Activated CD8-positive, alpha-beta T cell treated with anti-CD3 and anti-CD28 coated beads for 36 hours (primary cell): ENCODE measurements at regions of chr20 and their contacts with region 1.

Region 1: DNA sequence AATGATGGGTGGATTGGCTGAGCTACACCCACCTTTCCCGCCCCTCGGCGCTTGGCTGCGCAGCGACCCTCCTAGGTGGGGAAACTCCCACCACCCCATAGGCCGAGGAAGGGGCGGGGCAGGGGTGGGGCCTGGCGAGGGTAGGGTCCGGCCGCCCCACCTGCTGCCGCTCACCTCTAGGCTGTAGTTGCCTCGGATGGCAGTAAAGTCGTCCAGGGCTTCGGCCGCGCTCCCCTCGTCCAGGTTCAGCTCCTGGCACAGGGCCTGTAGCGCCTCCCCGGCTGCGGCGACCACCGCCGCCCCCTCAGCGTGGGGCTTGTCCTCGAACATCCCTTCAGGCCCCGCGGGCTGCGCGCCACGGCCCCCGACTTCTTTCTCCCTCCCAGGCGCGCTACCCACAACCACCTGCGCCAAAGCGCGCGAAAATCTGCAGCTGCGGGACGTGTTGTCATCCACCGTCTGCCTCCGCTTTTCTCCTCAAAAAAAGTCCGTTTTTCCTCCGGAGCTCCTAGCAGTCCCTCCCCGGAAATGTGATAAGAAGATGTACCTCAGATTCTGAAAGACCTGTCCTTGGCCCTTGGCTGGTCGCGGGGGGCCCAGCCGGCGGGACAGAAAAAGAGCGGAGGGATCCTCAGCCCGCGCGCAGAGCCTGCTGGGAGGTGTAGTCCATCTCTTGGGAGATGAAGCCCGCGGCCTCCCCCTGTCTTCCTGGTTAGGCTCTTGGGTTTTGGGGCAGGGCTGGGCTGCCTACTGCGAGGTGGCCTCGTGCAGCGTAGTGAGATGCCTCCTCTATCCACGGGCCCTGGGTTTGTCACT is at the start of gene RBL1:
- DNase-seq: peak; percentile 94
- ATAC-seq: peak; percentile 81
- H3K4me3 Mint-ChIP-seq: peak within 1 kb of the TSS; percentile 94
- H3K27ac Mint-ChIP-seq: peak within 1 kb of the TSS; percentile 100
- H3K4me1 Mint-ChIP-seq: peaks cover 27% of the 10 kb centered on the region
- H3K27me3 Mint-ChIP-seq: no peaks in the 10 kb centered on the region
- CTCF ChIP-seq: no peak
- total RNA-seq, gene RBL1: 33.9 to 39.6 TPM

Region 2: GRCh38 chr20:37072293-37073196 is 23.3 kb before region 1 on chr20:
- CTCF ChIA-PET with region 1: no interaction called
- POLR2A ChIA-PET with region 1: interaction called, 48 read pairs
- intact Hi-C with region 1: no loop called
- DNase-seq: no peak
- ATAC-seq: no peak
- H3K4me3 Mint-ChIP-seq: no peak overlapping the region
- H3K27ac Mint-ChIP-seq: peak overlapping the region; percentile 80
- H3K4me1 Mint-ChIP-seq: peaks cover 29% of the 10 kb centered on the region
- H3K27me3 Mint-ChIP-seq: no peaks in the 10 kb centered on the region
- CTCF ChIP-seq: no peak

Region 3: GRCh38 chr20:37081717-37082289 is 14.0 kb before region 1 on chr20:
- CTCF ChIA-PET with region 1: interaction called, 4 read pairs
- POLR2A ChIA-PET with region 1: interaction called, 48 read pairs
- intact Hi-C with region 1: no loop called
- DNase-seq: peak; percentile 36
- ATAC-seq: no peak
- H3K4me3 Mint-ChIP-seq: no peak overlapping the region
- H3K27ac Mint-ChIP-seq: peak overlapping the region; percentile 52
- H3K4me1 Mint-ChIP-seq: peaks cover 23% of the 10 kb centered on the region
- H3K27me3 Mint-ChIP-seq: no peaks in the 10 kb centered on the region
- CTCF ChIP-seq: no peak

Region 4: GRCh38 chr20:37178839-37179670 is 83.2 kb after region 1 on chr20 and contains the starts of genes MROH8 and RPN2:
- CTCF ChIA-PET with region 1: interaction called, 3 read pairs
- POLR2A ChIA-PET with region 1: interaction called, 16 read pairs
- intact Hi-C with region 1: no loop called
- DNase-seq: peak; percentile 98
- ATAC-seq: peak; percentile 94
- H3K4me3 Mint-ChIP-seq: peak within 1 kb of the TSS; percentile 91
- H3K27ac Mint-ChIP-seq: peak within 1 kb of the TSS; percentile 98
- H3K4me1 Mint-ChIP-seq: peaks cover 36% of the 10 kb centered on the region
- H3K27me3 Mint-ChIP-seq: no peaks in the 10 kb centered on the region
- CTCF ChIP-seq: no peak
- total RNA-seq, gene MROH8: 2.1 to 3.1 TPM
- total RNA-seq, gene RPN2: 103 to 107 TPM